HEK293 (cell line): ENCODE measurements at regions of chr16 and their contacts with region 1.

Region 1: DNA sequence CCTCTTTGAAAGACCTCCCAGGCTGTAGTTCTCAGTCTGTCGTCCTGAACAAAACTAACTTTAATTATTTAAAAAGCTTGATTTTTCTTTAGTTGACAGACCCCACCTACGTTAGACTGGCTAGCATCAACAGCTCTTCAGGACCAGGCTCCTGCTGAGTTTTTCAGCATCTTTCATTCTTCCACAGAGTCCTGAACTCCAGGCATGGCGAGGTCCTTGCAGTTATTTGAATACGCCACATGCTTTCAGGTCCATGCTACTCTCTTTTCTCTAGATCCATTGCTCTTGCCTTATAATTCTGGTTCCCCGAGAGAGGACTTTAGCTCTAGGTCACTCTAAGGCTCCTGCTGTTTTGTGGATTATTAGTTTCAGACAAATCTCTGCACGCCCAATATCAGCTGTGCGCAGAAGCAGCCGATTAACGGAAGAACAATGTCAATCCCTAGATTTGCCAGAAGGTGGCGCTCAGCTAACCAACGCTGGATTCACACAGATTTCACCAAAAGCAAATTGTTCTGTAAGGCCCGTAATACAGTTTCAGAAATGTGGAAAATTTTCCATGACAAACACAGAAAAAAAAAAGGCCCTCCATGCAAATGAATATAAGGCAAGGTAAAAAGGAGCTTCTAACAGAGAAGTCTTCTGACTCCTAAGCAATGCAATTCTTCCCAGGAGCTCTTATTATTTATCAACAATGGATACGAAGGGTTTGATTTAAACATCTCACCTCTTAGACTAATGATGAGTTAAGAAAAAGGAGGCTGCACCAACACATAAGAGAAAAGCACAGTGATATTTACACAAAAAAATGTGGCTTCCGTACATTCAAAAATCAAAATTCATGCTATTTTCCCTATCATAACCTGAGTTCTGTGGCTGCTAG is 33.5 kb upstream of the BCO1 start:
- H3K4me3 ChIP-seq: no peak overlapping the region
- H3K27ac ChIP-seq: no peak overlapping the region
- H3K4me1 ChIP-seq: no peaks in the 10 kb centered on the region
- CTCF ChIP-seq: 0 out of 2 replicates have a peak, but pooled peaks have one; percentile 21

Region 2: GRCh38 chr16:81026429-81026828 is 178.6 kb before region 1 on chr16:
- CTCF ChIA-PET with region 1: no interaction called
- POLR2A ChIA-PET with region 1: no interaction called
- H3K4me3 ChIP-seq: no peak overlapping the region
- H3K27ac ChIP-seq: no peak overlapping the region
- H3K4me1 ChIP-seq: no peaks in the 10 kb centered on the region
- CTCF ChIP-seq: no peak

Region 3: GRCh38 chr16:81080233-81080632 is 124.8 kb before region 1 on chr16:
- CTCF ChIA-PET with region 1: no interaction called
- POLR2A ChIA-PET with region 1: no interaction called
- H3K4me3 ChIP-seq: no peak overlapping the region
- H3K27ac ChIP-seq: no peak overlapping the region
- H3K4me1 ChIP-seq: no peaks in the 10 kb centered on the region
- CTCF ChIP-seq: no peak

Region 4: GRCh38 chr16:81127051-81127450 is 78.0 kb before region 1 on chr16:
- CTCF ChIA-PET with region 1: no interaction called
- POLR2A ChIA-PET with region 1: no interaction called
- H3K4me3 ChIP-seq: no peak overlapping the region
- H3K27ac ChIP-seq: no peak overlapping the region
- H3K4me1 ChIP-seq: no peaks in the 10 kb centered on the region
- CTCF ChIP-seq: no peak

Region 5: GRCh38 chr16:81189100-81189664 is 15.9 kb before region 1 on chr16:
- CTCF ChIA-PET with region 1: interaction called, 11 read pairs
- POLR2A ChIA-PET with region 1: no interaction called
- H3K4me3 ChIP-seq: no peak overlapping the region
- H3K27ac ChIP-seq: no peak overlapping the region
- H3K4me1 ChIP-seq: no peaks in the 10 kb centered on the region
- CTCF ChIP-seq: no peak

Region 6: DNA sequence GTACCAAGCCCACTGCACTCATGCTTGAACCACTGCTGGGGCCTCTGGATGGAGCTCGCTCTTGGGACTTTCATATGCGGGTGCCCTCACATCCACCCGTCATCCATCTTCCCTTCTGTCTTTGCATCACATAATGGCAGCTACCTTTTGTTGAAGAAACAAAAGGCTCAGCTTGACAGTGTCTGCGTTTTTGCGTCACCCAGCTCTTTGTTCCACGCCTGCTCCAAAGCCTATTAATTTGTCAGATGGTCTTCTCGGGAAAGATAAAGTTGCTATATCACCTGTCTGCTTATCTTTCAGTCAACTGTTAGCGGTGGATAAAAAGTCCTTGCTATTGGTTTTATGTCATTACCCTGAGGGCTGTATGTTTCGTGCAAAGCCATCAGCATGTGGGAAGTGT is 15.3 kb after region 1 on chr16:
- CTCF ChIA-PET with region 1: interaction called, 13 read pairs
- POLR2A ChIA-PET with region 1: no interaction called
- H3K4me3 ChIP-seq: no peak overlapping the region
- H3K27ac ChIP-seq: no peak overlapping the region
- H3K4me1 ChIP-seq: no peaks in the 10 kb centered on the region
- CTCF ChIP-seq: no peak

Region 7: GRCh38 chr16:81734632-81735434 is 529.8 kb after region 1 on chr16:
- CTCF ChIA-PET with region 1: interaction called, 11 read pairs
- POLR2A ChIA-PET with region 1: no interaction called
- H3K4me3 ChIP-seq: no peak overlapping the region
- H3K27ac ChIP-seq: no peak overlapping the region
- H3K4me1 ChIP-seq: no peaks in the 10 kb centered on the region
- CTCF ChIP-seq: no peak